Right ventricle myocardium inferior (tissue), 1 donor: ENCODE measurements at regions of chr17 and their contacts with region 1.

Region 1: GRCh38 chr17:44919885-44920564 is 4.7 kb upstream of the GFAP start:
- DNase-seq: peak; percentile 87
- ATAC-seq: peak; percentile 82

Region 2: GRCh38 chr17:44959821-44960531 is 40.0 kb after region 1 on chr17:
- intact Hi-C with region 1: no loop called
- DNase-seq: no peak
- ATAC-seq: no peak

Region 3: DNA sequence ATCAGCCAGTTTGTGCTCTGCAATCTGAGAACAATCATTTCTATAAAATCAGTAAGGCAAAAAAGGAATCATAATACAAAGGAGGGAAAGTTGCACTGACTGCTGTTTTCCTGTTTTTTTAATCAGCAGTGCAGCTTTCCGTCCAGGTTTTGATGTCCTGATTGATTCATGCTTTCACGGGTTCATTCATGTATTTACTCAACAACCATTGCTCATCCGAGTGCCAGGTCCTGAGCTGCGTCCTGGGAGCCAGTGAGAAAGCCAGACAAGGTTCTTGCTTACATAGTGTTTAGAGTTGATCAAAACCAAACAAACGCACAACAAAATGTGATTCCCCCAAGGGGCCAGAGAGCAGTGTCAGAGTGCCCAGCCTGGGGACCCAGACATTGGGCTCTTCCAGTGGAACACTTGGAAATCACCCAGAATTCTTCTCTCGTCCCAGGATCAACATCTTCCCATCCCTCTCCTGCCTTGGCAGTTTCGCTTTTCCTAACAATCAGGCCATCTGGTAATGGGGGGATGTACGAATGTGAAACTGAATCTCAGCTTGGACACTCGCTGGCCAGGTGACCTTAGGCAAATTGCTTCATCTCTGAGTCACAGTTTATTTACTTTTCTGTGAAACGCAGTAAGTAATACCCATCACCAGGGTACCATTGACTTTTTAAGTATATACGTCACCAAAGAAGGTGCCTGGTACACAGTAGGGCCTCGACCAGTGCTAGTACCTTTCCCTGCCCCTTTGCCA is 61.4 kb after region 1 on chr17:
- intact Hi-C with region 1: loop called (anchors 2 kb)
- DNase-seq: no peak
- ATAC-seq: no peak

Region 4: DNA sequence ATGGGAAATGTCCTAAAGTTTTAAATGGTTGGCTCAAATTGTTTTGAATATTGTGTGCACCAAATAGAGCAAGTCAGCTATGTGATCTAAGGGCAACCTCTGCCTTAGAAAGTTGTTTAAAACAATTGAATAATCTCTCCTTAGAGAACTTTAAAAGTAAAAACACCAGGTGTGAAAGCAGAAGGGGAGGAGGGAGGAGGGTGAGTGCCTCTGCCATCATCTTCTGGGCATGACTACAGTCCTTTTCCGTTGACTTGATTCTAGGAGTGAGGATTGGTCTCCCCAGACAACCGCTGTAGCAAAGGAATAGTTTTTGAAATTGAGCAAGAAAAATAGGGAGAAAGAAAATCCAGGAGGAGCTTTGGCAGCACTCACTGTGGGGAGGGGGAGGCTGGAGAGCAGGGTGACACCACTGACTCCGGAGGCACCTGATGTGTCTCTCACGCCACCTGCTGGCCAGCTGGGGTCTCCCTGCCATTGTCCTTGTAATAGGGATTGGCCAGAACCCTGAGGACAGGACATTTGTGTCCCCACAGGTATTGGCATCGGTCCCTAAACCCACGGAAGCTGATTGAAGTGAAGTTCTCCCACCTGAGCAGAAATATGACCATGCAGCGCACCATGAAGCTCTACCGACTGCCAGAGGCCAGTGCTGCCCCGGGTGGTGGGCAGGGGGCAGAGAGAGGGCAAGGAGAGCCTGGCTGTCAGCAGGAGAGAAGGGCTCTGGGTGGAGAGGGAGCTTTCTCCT is 179.0 kb after region 1 on chr17:
- intact Hi-C with region 1: loop called (anchors 2 kb)
- DNase-seq: peak; percentile 93
- ATAC-seq: peak; percentile 80